Activated CD4-positive, alpha-beta memory T cell treated with anti-CD3 and anti-CD28 coated beads for 36 hours (primary cell): ENCODE measurements at regions of chr14 and their contacts with region 1.

Region 1: DNA sequence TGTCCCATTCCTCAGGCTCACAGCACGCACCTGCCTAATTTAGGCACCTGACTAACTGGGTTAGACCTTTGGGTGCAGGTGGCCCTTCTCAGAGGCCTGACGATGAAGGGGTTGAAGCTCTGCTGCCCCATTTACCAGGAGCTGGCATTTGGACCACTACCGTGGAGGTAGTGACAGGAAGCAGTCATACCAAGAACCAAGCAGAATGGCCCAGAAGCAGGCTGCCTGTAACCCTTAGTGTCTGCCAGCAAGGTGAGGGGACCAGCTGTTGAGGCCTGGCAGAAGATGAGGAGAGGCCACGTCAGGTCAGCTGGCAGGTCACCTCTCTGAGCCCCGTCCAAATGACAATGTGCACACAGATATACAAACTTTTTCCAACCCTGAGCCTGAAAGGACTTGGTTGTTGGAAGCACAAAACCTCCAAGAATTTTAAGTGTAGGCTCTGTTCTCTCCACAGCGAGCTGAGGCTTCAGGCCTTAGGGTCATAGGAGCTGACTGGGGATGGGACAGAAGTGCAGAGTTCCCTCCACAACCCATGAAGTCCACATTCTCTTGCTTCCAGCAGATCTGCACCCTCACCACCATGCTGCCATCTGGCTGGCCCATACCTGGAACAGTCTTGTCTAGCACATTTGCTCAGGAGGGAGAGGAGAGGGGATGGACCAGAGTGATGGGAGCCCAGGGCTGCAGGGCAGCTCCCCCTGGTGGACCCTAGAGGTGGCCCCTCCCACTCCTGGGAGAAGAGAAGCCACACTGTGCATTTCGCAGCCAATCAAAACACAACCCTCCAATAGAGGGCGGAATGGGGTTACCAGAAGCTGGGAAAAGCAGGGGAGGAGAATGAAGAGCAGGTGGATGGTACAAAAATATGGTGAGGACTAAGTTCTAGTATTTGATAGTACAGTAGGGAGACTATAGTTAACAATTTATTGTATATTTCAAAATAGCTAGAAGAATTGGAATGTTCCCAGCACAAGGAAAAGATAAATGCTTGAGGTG is 23.3 kb downstream of the VASH1 start:
- DNase-seq: peak; percentile 81
- H3K4me3 Mint-ChIP-seq: no peak overlapping the region
- H3K27ac Mint-ChIP-seq: no peak overlapping the region
- H3K4me1 Mint-ChIP-seq: peaks cover 31% of the 10 kb centered on the region
- H3K27me3 Mint-ChIP-seq: no peaks in the 10 kb centered on the region

Region 2: DNA sequence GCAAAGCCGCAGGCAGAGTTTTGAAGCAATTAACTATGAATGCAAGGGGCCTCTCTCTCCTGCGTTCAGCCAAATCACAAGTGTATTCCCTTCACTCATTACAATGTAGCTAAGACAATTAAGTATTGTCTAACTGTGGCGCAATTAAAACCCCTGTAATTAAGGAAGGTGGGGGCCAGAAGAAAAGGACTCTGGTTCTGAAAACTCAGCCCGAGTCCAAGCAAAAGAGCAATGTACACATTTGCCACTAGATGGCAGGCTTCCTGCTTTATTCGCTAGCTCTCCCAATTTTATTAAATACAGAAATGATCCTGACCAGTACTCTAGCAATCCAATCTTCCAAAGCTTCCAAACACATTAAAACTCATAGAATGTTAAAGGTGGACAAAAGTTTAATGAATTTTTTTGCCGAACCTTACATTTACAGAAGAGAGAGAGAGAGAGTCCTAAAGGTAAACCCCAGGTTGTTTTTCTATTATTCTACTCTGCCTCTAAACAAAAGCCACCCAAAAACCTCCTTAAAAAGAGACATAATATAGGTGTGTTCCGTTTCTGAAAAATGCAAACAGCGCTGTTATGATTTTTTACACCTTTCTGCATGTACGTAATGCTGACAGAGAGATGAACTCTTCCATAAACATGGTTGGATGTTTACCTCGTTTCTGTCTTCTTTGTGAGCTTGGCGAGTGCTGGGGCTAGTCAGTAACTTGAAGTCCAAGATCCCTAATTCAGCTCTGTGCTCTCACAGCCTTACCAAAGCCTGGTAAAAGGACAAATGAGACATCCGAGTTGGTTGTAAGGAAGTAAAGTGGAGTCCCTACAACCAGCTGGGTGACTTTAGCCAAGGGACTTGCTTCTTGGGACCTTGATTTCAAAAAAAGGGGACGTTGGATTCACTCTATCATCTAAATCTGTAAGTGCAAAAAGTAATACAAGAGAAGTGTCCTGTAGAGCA is 74.2 kb before region 1 on chr14:
- CTCF ChIA-PET with region 1: interaction called, 158 read pairs
- POLR2A ChIA-PET with region 1: no interaction called
- intact Hi-C with region 1: loop called (anchors 1 kb)
- DNase-seq: peak; percentile 20
- H3K4me3 Mint-ChIP-seq: no peak overlapping the region
- H3K27ac Mint-ChIP-seq: no peak overlapping the region
- H3K4me1 Mint-ChIP-seq: no peaks in the 10 kb centered on the region
- H3K27me3 Mint-ChIP-seq: peaks cover 16% of the 10 kb centered on the region

Region 3: DNA sequence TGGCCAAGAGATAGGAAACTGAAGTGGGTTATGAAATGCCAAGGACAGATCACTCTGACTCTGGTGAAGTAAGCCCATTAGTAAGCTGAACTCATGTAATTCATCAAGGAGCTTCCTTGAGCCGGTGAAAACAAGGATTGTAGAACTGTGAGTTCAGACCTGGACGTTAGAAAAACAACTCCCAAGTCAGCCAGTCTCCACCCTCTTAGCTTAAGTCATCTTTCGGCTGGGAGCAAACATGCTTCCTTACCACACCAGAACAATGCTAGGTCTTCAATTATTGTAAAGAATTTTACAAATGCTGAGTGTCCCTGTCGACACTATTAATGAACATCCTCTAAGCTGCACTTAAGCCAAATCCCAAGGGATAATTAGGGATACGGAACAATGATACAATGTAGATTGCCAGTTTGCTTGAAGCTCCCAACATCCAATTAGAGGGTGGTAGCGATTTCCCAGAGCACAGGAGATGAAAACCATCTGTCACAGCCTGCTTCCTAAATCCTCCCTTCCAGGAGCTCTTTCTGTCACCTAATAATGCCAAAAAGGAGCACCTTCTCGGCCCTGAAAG is 69.0 kb before region 1 on chr14:
- CTCF ChIA-PET with region 1: interaction called, 158 read pairs
- POLR2A ChIA-PET with region 1: no interaction called
- intact Hi-C with region 1: loop called (anchors 1 kb)
- DNase-seq: no peak
- H3K4me3 Mint-ChIP-seq: no peak overlapping the region
- H3K27ac Mint-ChIP-seq: no peak overlapping the region
- H3K4me1 Mint-ChIP-seq: no peaks in the 10 kb centered on the region
- H3K27me3 Mint-ChIP-seq: peaks cover 37% of the 10 kb centered on the region

Region 4: DNA sequence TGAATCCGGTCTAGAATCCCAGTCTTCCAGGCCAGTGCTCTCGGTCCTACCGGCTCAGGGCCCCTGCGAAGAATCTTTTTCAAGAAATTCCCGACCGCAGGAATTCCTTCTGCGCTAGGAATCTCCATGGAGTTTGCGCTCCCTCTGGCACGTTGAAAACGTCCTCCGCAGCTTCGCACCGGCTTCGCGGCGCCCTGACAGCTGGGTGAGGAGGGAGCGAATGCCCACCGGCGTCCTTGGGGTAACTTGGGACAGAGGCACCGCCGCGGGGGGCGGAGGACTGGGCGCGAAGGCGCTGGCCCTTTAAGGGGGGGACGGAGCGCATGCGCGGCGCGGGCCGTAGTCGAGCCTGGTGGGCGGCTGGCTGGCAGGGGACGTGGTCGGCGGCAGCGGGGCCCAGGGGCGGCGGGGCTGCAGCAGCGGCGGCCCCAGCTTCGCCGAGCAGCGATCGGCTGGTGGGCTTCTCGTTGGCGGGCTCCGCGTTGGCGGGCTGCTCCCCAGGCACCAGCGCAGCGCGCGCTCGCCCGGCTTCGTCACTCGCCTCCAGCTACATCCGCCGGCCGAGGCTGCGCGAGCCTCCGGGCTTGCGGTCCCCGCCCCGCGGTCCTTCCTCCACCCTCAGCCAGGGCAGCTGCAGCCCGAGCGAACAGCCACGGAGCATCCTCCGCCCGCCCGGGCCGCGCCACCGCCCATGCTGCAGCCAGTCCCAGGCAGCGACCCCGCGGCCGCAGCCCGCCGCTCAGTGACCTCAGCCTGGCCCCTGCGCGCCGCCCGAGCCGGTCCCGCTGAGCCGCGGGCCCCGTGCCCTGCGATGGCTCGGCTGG is 23.2 kb before region 1 on chr14 and contains the start of gene VASH1:
- CTCF ChIA-PET with region 1: interaction called, 23 read pairs
- POLR2A ChIA-PET with region 1: no interaction called
- intact Hi-C with region 1: loop called (anchors 2 kb)
- DNase-seq: peak; percentile 73
- H3K4me3 Mint-ChIP-seq: peak within 1 kb of the TSS; percentile 75
- H3K27ac Mint-ChIP-seq: no peak within 1 kb of the TSS
- H3K4me1 Mint-ChIP-seq: peaks cover 12% of the 10 kb centered on the region
- H3K27me3 Mint-ChIP-seq: peaks cover 6% of the 10 kb centered on the region
- total RNA-seq, gene VASH1: 6.1 TPM

Region 5: GRCh38 chr14:76767681-76768656 is 16.6 kb before region 1 on chr14:
- CTCF ChIA-PET with region 1: interaction called, 21 read pairs
- POLR2A ChIA-PET with region 1: interaction called, 4 read pairs
- intact Hi-C with region 1: loop called (anchors 1 kb)
- DNase-seq: peak; percentile 89
- H3K4me3 Mint-ChIP-seq: no peak overlapping the region
- H3K27ac Mint-ChIP-seq: peak overlapping the region; percentile 79
- H3K4me1 Mint-ChIP-seq: peaks cover 22% of the 10 kb centered on the region
- H3K27me3 Mint-ChIP-seq: no peaks in the 10 kb centered on the region

Region 6: DNA sequence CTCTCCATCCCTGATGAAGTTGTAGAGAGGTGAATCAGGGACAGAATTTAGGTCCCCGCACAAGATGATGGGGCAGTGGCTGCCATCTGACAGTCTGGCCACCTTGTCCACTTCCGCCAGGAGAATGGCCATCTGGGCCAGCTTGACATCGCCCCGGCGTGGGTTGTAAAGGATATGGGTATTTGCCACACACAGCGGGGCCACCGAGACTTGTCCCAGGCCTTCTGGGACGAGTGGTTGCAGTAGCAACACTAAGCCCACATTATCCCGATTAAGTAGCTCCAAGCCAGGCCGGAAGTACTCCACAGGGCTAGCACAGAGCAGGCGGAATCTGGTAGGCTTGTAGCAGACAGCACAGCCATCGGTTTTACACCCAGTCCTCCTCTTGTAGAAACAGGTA is 21.9 kb after region 1 on chr14:
- CTCF ChIA-PET with region 1: interaction called, 27 read pairs
- POLR2A ChIA-PET with region 1: no interaction called
- intact Hi-C with region 1: no loop called
- DNase-seq: no peak
- H3K4me3 Mint-ChIP-seq: no peak overlapping the region
- H3K27ac Mint-ChIP-seq: no peak overlapping the region
- H3K4me1 Mint-ChIP-seq: peaks cover 17% of the 10 kb centered on the region
- H3K27me3 Mint-ChIP-seq: no peaks in the 10 kb centered on the region

Region 7: GRCh38 chr14:76812211-76813044 is 27.9 kb after region 1 on chr14 and contains the start of gene ANGEL1:
- CTCF ChIA-PET with region 1: interaction called, 27 read pairs
- POLR2A ChIA-PET with region 1: no interaction called
- intact Hi-C with region 1: no loop called
- DNase-seq: peak; percentile 98
- H3K4me3 Mint-ChIP-seq: peak within 1 kb of the TSS; percentile 92
- H3K27ac Mint-ChIP-seq: peak within 1 kb of the TSS; percentile 80
- H3K4me1 Mint-ChIP-seq: peaks cover 19% of the 10 kb centered on the region
- H3K27me3 Mint-ChIP-seq: no peaks in the 10 kb centered on the region
- total RNA-seq, gene ANGEL1: 14.6 to 15.9 TPM